GM12878 (cell line): ENCODE measurements at regions of chr4 and their contacts with region 1.

Region 1: DNA sequence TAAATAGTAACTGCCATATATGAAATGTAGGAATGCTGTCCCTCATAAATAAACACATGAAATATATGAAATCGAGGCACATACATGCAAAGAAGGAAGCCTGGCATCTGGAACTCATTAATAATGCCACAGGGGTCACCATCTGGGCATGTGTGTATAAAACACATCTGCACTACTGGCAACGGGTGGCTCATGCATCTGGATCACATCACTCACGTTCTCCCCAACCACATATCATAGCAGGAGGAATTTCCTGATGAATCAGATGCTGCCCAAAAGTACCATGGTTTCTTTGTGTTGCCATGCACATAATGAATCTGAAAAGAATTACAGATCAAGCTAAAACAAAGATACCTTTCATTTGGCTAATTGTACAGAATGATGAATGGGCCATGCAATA is 28.6 kb downstream of the RNF175 start:
- DNase-seq: no peak
- ATAC-seq: no peak
- H3K4me3 ChIP-seq: no peak overlapping the region
- H3K27ac ChIP-seq: no peak overlapping the region
- H3K4me1 ChIP-seq: peaks cover 12% of the 10 kb centered on the region; the same call in 1 of the 2 replicates
- H3K27me3 ChIP-seq: 0 out of 4 replicates have a peak, but pooled peaks cover 0 to 4% of the 10 kb centered on the region in 2 experiments
- CTCF ChIP-seq: no peak
- EP300 ChIP-seq: no peak
- POLR2A ChIP-seq: no peak
- RAD21 ChIP-seq: no peak

Region 2: GRCh38 chr4:152831416-152831815 is 899.8 kb before region 1 on chr4:
- CTCF ChIA-PET with region 1: no interaction called
- POLR2A ChIA-PET with region 1: no interaction called
- RAD21 ChIA-PET with region 1: no interaction called
- SMC1A ChIA-PET with region 1: no interaction called
- in situ Hi-C with region 1: no loop called
- intact Hi-C with region 1: no loop called
- DNase-seq: no peak
- ATAC-seq: no peak
- H3K4me3 ChIP-seq: no peak overlapping the region
- H3K27ac ChIP-seq: no peak overlapping the region
- H3K4me1 ChIP-seq: no peaks in the 10 kb centered on the region
- H3K27me3 ChIP-seq: no peaks in the 10 kb centered on the region
- CTCF ChIP-seq: no peak
- EP300 ChIP-seq: no peak
- POLR2A ChIP-seq: no peak
- RAD21 ChIP-seq: no peak

Region 3: DNA sequence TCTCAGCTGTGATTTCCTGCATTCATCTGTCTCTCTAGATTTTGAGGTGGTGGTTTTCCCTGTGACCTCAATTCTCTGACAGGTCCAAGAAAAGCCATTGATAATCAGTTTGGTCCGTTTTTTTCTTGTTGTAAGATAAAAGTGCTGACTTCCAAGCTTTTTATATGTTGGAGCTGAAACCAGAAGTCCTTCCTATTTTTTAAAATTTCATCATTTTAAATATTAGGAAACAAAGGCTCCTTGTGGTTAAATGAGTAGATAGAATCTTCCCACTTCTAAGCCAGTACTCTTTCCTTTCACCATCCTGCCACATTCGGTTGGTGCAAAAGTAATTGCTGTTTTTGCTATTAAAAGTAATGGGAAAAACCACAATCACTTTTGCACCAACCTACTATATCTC is 10.3 kb after region 1 on chr4:
- CTCF ChIA-PET with region 1: interaction called, 6 read pairs
- POLR2A ChIA-PET with region 1: no interaction called
- RAD21 ChIA-PET with region 1: no interaction called
- SMC1A ChIA-PET with region 1: interaction called, 14 read pairs
- in situ Hi-C with region 1: no loop called
- intact Hi-C with region 1: no loop called
- DNase-seq: no peak
- ATAC-seq: no peak
- H3K4me3 ChIP-seq: no peak overlapping the region
- H3K27ac ChIP-seq: no peak overlapping the region
- H3K4me1 ChIP-seq: no peaks in the 10 kb centered on the region
- H3K27me3 ChIP-seq: no peaks in the 10 kb centered on the region; a peak in 1 of 4 replicates
- CTCF ChIP-seq: no peak
- EP300 ChIP-seq: no peak
- POLR2A ChIP-seq: no peak
- RAD21 ChIP-seq: no peak